Calu3 (cell line): ENCODE measurements at regions of chr20 and their contacts with region 1.

Region 1: GRCh38 chr20:5569021-5569420 is 181.2 kb upstream of the SHLD1 start:
- DNase-seq: peak; percentile 53
- H3K4me3 Mint-ChIP-seq: no peak overlapping the region
- H3K27ac Mint-ChIP-seq: no peak overlapping the region
- H3K4me1 Mint-ChIP-seq: no peaks in the 10 kb centered on the region
- H3K27me3 Mint-ChIP-seq: no peaks in the 10 kb centered on the region
- CTCF ChIP-seq: no peak

Region 2: DNA sequence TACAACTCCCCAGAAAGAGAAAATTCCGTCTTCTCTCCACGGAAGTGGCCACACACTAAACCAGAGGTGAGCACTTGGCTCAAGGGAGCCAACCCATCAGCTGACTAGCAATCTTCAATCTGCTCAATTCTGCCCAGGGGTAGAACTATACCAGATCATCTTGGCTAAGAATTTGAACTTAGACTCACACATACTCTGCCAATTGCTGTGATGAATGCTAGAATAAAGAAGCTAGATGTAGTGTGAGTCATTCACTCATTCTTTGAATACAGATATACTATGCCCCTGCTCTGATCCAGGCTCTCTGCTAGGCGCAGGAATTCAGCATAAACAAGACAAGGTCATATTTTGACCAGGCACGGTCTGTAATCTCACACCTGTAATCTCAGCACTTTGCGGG is 33.3 kb after region 1 on chr20:
- CTCF ChIA-PET with region 1: no interaction called
- intact Hi-C with region 1: no loop called
- DNase-seq: no peak
- H3K4me3 Mint-ChIP-seq: no peak overlapping the region
- H3K27ac Mint-ChIP-seq: no peak overlapping the region
- H3K4me1 Mint-ChIP-seq: peaks cover 6% of the 10 kb centered on the region
- H3K27me3 Mint-ChIP-seq: no peaks in the 10 kb centered on the region
- CTCF ChIP-seq: no peak

Region 3: GRCh38 chr20:5674176-5674660 is 105.2 kb after region 1 on chr20:
- CTCF ChIA-PET with region 1: no interaction called
- intact Hi-C with region 1: no loop called
- DNase-seq: no peak
- H3K4me3 Mint-ChIP-seq: no peak overlapping the region
- H3K27ac Mint-ChIP-seq: no peak overlapping the region
- H3K4me1 Mint-ChIP-seq: peaks cover 6% of the 10 kb centered on the region
- H3K27me3 Mint-ChIP-seq: peaks cover 9% of the 10 kb centered on the region
- CTCF ChIP-seq: no peak

Region 4: GRCh38 chr20:5933802-5934436 is 364.9 kb after region 1 on chr20:
- CTCF ChIA-PET with region 1: no interaction called
- intact Hi-C with region 1: loop called (anchors 10 kb)
- DNase-seq: peak; percentile 9
- H3K4me3 Mint-ChIP-seq: no peak overlapping the region
- H3K27ac Mint-ChIP-seq: no peak overlapping the region
- H3K4me1 Mint-ChIP-seq: no peaks in the 10 kb centered on the region
- H3K27me3 Mint-ChIP-seq: peaks cover 39% of the 10 kb centered on the region
- CTCF ChIP-seq: no peak